Activated CD4-positive, alpha-beta T cell treated with anti-CD3 and anti-CD28 coated beads, Interleukin-2, amount 10 ng/mL, durations not matched to agents 24 days and 14 days (primary cell): ENCODE measurements at regions of chr2 and their contacts with region 1.

Region 1: DNA sequence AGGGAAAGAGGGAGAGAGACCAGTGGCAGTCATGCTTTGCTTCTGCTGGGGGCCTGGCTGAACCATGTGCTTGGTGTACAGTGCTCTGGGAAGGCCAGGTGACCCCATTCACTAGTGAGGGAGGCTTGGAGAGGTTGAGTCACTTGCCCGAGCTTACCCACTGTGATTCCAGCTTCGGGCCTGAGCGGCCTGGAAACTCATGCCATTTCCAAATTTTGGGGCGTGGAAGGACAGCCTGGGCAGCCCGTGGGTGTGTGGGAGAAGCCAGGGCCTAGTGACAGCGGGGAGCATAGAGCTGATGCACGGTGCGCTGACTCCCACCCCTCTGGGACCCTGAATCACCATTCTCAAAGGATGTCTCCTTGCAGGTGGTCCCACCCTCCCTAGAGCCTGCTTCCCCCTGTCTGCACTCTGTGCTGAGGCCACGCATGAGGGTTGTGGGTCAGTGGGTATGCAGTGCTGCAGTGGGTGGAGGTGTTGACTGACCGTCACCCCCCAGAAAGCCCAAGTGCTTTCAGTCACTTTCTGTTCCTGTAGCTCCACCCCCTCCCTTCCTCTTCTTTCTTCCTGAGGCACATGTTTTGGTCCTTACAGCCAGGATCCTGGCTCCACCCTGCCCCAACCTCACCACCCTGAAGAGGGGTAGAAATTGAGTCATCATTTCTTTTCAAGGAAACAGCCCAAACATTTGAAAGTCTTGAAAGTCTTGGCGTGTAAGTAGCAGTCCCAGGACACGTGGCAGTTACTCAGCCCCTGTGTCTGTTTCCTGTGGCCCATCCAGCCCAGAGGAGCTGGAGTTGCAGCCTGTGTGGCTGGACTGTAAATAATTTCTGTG is 69.3 kb upstream of the MCFD2 start:
- DNase-seq: peak; percentile 89
- H3K4me3 Mint-ChIP-seq: peak overlapping the region; percentile 79
- H3K27ac Mint-ChIP-seq: peak overlapping the region; percentile 97
- H3K4me1 Mint-ChIP-seq: peaks cover 63% of the 10 kb centered on the region
- H3K27me3 Mint-ChIP-seq: no peaks in the 10 kb centered on the region

Region 2: GRCh38 chr2:46942139-46942517 is 42.7 kb before region 1 on chr2:
- intact Hi-C with region 1: loop called (anchors 1 kb)
- DNase-seq: peak; percentile 93
- H3K4me3 Mint-ChIP-seq: peak overlapping the region; percentile 97
- H3K27ac Mint-ChIP-seq: peak overlapping the region; percentile 100
- H3K4me1 Mint-ChIP-seq: peaks cover 51% of the 10 kb centered on the region
- H3K27me3 Mint-ChIP-seq: no peaks in the 10 kb centered on the region

Region 3: DNA sequence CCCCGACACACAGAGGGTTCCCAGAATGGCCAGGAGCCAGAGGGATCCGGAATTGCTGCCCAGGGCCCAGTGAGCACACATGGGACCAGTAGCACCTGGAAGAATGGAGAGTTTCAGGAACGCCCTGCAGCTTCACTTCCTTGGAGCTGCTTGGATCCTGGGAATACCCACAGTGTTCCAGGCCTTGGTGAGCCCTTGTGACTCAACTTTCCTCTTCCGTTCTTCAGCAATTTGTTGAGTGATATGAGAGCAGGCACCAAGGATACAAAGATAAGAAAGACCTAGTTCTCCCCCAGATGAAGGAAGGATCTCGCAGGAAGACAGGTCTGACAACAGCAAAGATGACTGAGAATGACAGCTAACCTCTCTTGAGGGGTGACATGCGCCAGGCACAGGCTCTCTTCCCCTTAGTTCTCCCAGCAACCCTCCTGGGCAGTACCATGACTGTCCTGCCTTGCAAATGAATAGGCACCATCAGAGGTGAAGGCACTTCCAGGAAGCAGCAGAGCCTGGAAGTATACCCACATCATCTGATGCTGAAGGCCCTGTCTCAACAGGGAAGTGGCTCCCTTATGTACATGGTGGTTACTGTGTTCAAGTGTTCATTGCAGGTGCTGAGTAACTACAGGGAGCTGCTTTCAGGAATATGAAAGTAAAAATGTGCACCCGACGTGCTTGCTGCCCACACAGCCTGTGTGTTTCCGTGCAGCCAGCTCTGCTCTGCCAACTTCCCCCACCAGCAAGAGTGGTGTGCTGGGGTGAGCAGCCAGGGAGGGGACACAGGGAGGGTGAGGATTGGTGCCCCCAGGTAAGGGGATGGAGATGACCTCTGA is 54.0 kb after region 1 on chr2:
- intact Hi-C with region 1: loop called (anchors 2 kb)
- DNase-seq: peak; percentile 78
- H3K4me3 Mint-ChIP-seq: peak overlapping the region; percentile 51
- H3K27ac Mint-ChIP-seq: peak overlapping the region; percentile 90
- H3K4me1 Mint-ChIP-seq: peaks cover 18% of the 10 kb centered on the region
- H3K27me3 Mint-ChIP-seq: no peaks in the 10 kb centered on the region

Region 4: DNA sequence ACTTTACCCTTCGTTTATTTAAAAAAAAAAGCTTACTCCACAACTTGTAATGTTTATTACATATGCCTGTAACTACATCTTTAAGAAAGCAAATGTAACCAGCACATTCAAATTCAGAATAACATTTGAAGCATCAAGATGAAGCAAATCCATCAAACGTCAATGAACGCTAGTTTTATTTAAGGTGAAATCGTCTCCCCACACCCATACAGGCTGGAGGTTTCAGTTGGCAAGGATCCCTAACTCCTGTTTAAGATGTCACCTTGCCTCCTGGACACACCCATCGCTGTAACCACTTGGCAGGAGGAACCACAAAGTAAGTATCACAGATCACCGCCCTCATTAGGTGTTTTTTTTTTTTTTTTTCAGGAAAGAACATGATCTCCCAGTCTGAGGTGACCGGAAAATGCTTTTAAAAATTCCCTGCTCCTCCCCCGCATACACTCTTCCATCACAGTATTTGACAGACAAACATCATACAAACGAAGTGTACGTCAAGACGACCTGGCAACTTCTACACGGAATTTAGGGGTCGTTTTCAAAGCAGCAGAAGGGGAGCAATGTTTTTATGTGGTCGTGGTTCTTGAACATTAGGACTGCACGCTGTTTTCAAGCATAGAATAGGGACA is 190.0 kb after region 1 on chr2:
- intact Hi-C with region 1: loop called (anchors 1 kb)
- DNase-seq: peak; percentile 77
- H3K4me3 Mint-ChIP-seq: peak overlapping the region; percentile 87
- H3K27ac Mint-ChIP-seq: peak overlapping the region; percentile 96
- H3K4me1 Mint-ChIP-seq: peaks cover 55% of the 10 kb centered on the region
- H3K27me3 Mint-ChIP-seq: peaks cover 3% of the 10 kb centered on the region